Mammary epithelial cell (primary cell): ENCODE measurements at regions of chr9 and their contacts with region 1.

Region 1: GRCh38 chr9:128892317-128892921 is 10.5 kb downstream of the LRRC8A start:
- DNase-seq: peak; percentile 97
- H3K4me3 ChIP-seq: peak overlapping the region in 2 of 3 experiments; percentile 6 to 10
- H3K27ac ChIP-seq: peak overlapping the region; percentile 76
- H3K4me1 ChIP-seq: peaks cover 56% of the 10 kb centered on the region
- H3K27me3 ChIP-seq: no peaks in the 10 kb centered on the region
- CTCF ChIP-seq: no peak

Region 2: GRCh38 chr9:128412120-128412790 is 480.2 kb before region 1 on chr9:
- CTCF ChIA-PET with region 1: no interaction called
- dilution Hi-C with region 1: no loop called
- in situ Hi-C with region 1: no loop called
- intact Hi-C with region 1: no loop called
- DNase-seq: no peak
- H3K4me3 ChIP-seq: no peak overlapping the region
- H3K27ac ChIP-seq: no peak overlapping the region
- H3K4me1 ChIP-seq: peaks cover 6% of the 10 kb centered on the region
- H3K27me3 ChIP-seq: no peaks in the 10 kb centered on the region
- CTCF ChIP-seq: peak; percentile 47 to 68

Region 3: GRCh38 chr9:128881901-128882681 is 10.3 kb before region 1 on chr9 and contains the starts of genes KYAT1 and LRRC8A:
- CTCF ChIA-PET with region 1: interaction called, 5 read pairs
- dilution Hi-C with region 1: no loop called
- in situ Hi-C with region 1: no loop called
- intact Hi-C with region 1: loop called (anchors 1 kb)
- DNase-seq: peak; percentile 96
- H3K4me3 ChIP-seq: peak within 1 kb of the TSS; percentile 85 to 88 (median 87)
- H3K27ac ChIP-seq: peak within 1 kb of the TSS; percentile 76
- H3K4me1 ChIP-seq: peaks cover 49% of the 10 kb centered on the region
- H3K27me3 ChIP-seq: no peaks in the 10 kb centered on the region
- CTCF ChIP-seq: no peak
- total RNA-seq, gene KYAT1: 10.2 to 11.5 TPM
- total RNA-seq, gene LRRC8A: 155 to 206 TPM

Region 4: GRCh38 chr9:128902351-128903078 is 10.1 kb after region 1 on chr9:
- CTCF ChIA-PET with region 1: no interaction called
- dilution Hi-C with region 1: no loop called
- in situ Hi-C with region 1: no loop called
- intact Hi-C with region 1: loop called (anchors 1 kb)
- DNase-seq: peak; percentile 96
- H3K4me3 ChIP-seq: no peak overlapping the region
- H3K27ac ChIP-seq: peak overlapping the region; percentile 82
- H3K4me1 ChIP-seq: peaks cover 65% of the 10 kb centered on the region
- H3K27me3 ChIP-seq: no peaks in the 10 kb centered on the region
- CTCF ChIP-seq: no peak

Region 5: GRCh38 chr9:128911529-128912035 is 19.2 kb after region 1 on chr9:
- CTCF ChIA-PET with region 1: no interaction called
- dilution Hi-C with region 1: no loop called
- in situ Hi-C with region 1: no loop called
- intact Hi-C with region 1: loop called (anchors 1 kb)
- DNase-seq: no peak
- H3K4me3 ChIP-seq: no peak overlapping the region
- H3K27ac ChIP-seq: peak overlapping the region; percentile 91
- H3K4me1 ChIP-seq: peaks cover 63% of the 10 kb centered on the region
- H3K27me3 ChIP-seq: no peaks in the 10 kb centered on the region
- CTCF ChIP-seq: no peak

Region 6: DNA sequence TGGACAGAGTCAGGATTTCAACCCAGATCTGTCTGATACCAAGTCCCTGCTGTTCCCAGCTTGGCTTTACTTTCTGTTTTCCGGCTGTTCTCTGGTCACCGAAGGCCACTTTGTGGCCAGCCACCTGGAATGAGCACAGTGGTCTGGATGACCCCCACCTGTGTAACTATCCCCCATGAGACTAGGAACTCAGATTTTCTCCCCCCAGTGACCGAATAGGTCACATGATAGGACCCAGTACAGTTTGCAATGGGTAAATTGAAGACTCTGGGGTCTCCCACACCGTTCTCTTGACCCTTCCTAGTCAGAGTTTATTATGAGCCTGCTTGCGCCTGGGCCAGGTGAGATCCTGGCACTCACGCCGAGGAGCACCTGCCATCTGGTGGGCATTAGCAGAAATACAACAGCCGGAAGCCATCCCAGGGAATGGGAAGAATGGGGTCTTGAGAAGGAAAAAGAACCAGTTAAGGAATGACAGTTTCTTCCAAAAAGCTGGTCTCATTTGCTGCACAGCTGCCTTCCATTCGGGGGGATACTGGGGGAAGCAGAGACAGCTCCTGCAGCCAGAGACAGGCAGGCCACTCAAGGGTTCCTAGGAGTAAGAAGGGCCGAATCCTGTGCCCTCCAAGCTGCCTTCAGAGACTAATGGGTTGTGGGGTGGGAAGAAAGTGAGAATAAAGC is 35.5 kb after region 1 on chr9:
- CTCF ChIA-PET with region 1: no interaction called
- dilution Hi-C with region 1: no loop called
- in situ Hi-C with region 1: no loop called
- intact Hi-C with region 1: loop called (anchors 1 kb)
- DNase-seq: no peak
- H3K4me3 ChIP-seq: no peak overlapping the region
- H3K27ac ChIP-seq: no peak overlapping the region
- H3K4me1 ChIP-seq: peaks cover 3% of the 10 kb centered on the region
- H3K27me3 ChIP-seq: no peaks in the 10 kb centered on the region
- CTCF ChIP-seq: peak; percentile 84 to 88